Activated naive CD8-positive, alpha-beta T cell treated with anti-CD3 and anti-CD28 coated beads, Interleukin-2, amount 10 ng/mL, durations not matched to agents 7 days and 5 days (primary cell): ENCODE measurements at regions of chr19 and their contacts with region 1.

Region 1: DNA sequence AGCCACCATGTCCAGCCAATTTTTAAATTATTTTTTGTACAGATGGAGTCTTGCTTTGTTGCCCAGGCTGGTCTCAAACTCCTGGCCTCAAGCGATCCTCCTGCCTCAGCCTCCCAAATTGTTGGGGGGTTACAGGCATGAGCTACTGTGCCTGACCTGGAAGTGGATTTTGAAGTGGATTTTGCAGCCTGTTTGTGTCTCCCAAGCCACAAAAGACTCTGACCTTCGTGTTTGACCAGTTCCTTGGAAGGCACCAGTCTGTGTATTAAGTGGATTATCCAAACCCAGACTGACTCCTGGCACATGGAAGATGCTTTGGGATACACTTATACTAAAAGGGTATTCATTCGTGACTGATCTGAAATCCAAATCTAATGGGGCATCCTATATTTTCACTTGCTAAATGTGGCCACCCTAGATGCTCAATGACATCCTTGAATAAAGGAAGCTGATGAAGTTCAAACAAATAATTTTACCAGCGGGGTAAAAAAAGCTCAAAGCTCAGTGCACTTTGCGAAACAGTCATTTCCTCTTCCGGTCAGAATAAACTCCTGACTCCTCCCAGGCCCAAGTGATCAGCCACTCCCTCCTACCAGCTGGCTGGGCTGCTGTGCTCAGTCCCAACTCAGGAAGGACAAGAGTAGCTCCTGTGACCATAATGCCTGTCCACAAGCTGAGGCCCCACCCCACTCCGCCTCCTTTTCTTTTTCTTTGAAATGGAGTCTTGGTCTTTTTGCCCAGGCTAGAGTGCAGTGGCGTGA is 32.6 kb upstream of the GATAD2A start:
- DNase-seq: peak; percentile 50
- ATAC-seq: peak; percentile 95
- H3K4me3 Mint-ChIP-seq: peak overlapping the region; percentile 61
- H3K27ac Mint-ChIP-seq: peak overlapping the region; percentile 93
- H3K4me1 Mint-ChIP-seq: peaks cover 11% of the 10 kb centered on the region
- H3K27me3 Mint-ChIP-seq: no peaks in the 10 kb centered on the region

Region 2: GRCh38 chr19:19320362-19321142 is 52.3 kb before region 1 on chr19 and contains the starts of genes MAU2 and SUGP1:
- POLR2A ChIA-PET with region 1: no interaction called
- DNase-seq: peak; percentile 90
- ATAC-seq: peak; percentile 94
- H3K4me3 Mint-ChIP-seq: peak within 1 kb of the TSS; percentile 96
- H3K27ac Mint-ChIP-seq: peak within 1 kb of the TSS; percentile 99
- H3K4me1 Mint-ChIP-seq: peaks cover 24% of the 10 kb centered on the region
- H3K27me3 Mint-ChIP-seq: no peaks in the 10 kb centered on the region
- total RNA-seq, gene MAU2: 103 to 105 TPM
- total RNA-seq, gene SUGP1: 66.8 to 70.6 TPM

Region 3: DNA sequence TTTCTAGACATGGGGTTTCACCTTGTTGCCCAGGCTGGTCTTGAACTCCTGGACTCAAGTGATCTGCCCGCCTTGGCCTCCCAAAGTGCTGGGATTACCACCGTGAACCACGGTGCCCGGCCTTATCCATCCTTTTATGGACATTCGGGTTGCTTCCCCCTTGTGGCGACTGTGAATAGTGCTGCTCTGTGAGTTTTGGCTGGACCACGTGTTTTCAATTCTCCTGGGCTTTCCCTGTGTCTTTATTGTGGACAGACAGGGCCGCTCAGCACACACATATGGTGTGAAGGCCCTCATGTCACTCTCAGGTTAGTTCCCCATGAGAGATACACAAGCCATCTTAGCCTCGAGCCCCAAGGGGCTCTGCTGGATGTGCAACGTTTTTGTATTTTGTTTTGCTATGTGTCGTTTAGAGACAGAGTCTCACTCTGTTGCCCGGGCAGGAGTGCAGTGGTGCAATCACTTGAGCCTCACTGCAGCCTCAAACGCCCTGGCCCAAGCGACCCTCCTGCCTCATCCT is 11.7 kb before region 1 on chr19:
- POLR2A ChIA-PET with region 1: interaction called, 16 read pairs
- DNase-seq: peak; percentile 71
- ATAC-seq: peak; percentile 61
- H3K4me3 Mint-ChIP-seq: peak overlapping the region; percentile 28
- H3K27ac Mint-ChIP-seq: peak overlapping the region; percentile 9
- H3K4me1 Mint-ChIP-seq: peaks cover 16% of the 10 kb centered on the region
- H3K27me3 Mint-ChIP-seq: no peaks in the 10 kb centered on the region

Region 4: DNA sequence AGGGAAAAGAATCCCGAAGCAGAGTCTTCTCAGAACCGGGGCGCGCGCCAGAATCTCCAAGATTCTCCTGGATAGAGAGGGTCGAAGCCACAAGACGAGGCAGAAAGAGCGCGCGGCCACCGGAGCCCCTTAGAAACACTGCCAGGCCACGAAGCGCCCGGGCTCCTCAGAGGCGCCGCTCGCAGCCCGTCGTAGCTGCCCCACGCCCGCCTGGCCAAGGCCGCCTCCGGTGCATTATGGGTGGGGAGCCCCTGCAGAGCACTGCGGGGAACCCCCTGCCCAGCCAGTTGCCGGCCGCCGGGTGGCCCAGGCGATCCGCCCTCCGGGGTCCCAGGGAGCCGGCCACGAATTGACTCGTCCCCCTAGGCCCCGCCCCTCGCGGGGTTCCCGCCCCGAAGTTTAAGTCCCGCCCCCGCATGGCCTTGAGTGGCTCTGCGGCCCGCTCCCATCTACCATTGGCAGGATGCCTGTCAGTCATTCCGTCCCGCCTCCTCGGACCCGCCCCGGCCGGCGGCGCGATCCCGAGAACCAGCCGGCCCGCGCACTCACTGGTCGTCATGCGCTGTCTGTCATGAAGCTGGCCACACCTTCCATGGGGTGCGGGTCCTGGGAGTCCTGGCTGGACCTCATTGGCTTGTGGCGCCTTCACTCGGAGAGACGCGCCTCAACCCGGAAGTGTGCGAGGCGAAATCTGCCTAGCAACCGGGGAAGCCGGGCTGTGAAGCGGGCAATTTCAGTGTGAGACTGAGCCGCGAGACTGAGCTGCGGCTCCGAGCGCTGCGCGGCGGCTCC is 12.5 kb after region 1 on chr19:
- POLR2A ChIA-PET with region 1: interaction called, 16 read pairs
- DNase-seq: peak; percentile 99
- ATAC-seq: peak; percentile 95
- H3K4me3 Mint-ChIP-seq: peak overlapping the region; percentile 89
- H3K27ac Mint-ChIP-seq: peak overlapping the region; percentile 93
- H3K4me1 Mint-ChIP-seq: peaks cover 35% of the 10 kb centered on the region
- H3K27me3 Mint-ChIP-seq: no peaks in the 10 kb centered on the region

Region 5: DNA sequence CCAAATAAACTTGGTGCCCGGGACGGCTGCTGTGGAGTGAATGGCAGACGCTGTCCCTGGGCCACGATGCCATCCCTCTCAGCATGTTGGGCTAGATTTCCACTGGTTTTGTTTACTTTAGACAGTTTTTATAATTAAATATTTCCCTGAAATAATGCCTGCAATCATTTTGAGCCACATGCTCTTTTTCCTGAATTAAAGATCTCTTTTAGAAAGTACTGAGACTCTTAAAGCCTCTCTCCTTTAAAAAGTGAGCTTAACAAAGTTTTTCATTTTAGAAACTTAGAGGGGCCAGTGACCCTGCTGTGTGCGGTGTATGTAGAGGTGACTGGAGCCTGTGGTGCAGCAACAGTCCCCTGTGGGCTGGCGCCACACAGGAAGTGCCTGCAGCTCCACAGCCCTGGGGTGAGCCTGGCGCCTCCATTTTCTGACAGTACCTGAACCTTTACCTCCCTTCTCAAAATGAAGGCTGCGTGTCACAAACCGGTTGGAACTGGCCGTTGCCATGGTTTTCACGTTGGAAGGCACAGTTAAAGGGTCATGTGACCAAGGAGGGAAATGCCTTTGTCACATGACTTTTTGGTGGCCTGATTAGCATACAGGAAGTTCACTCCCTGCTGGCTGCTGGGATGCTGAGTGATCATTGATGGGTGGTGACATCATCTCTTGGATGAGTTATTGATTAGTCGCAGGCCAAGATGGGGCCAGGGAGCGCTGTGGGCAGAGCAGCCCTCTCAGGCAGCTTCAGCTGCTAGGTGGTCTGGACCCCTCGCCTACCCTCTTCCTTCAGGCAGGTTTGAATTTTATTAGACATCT is 116.2 kb after region 1 on chr19:
- POLR2A ChIA-PET with region 1: interaction called, 11 read pairs
- DNase-seq: peak; percentile 87
- ATAC-seq: peak; percentile 93
- H3K4me3 Mint-ChIP-seq: peak overlapping the region; percentile 73
- H3K27ac Mint-ChIP-seq: peak overlapping the region; percentile 99
- H3K4me1 Mint-ChIP-seq: peaks cover 36% of the 10 kb centered on the region
- H3K27me3 Mint-ChIP-seq: no peaks in the 10 kb centered on the region

Region 6: GRCh38 chr19:19515764-19516519 is 143.1 kb after region 1 on chr19 and contains the start of gene NDUFA13:
- POLR2A ChIA-PET with region 1: interaction called, 10 read pairs
- DNase-seq: peak; percentile 98
- ATAC-seq: peak; percentile 89
- H3K4me3 Mint-ChIP-seq: peak within 1 kb of the TSS; percentile 89
- H3K27ac Mint-ChIP-seq: peak within 1 kb of the TSS; percentile 92
- H3K4me1 Mint-ChIP-seq: peaks cover 18% of the 10 kb centered on the region
- H3K27me3 Mint-ChIP-seq: no peaks in the 10 kb centered on the region
- total RNA-seq, gene NDUFA13: 306 to 336 TPM